Colonic mucosa (tissue), 4 donors: ENCODE measurements at regions of chr13 and their contacts with region 1.

Region 1: DNA sequence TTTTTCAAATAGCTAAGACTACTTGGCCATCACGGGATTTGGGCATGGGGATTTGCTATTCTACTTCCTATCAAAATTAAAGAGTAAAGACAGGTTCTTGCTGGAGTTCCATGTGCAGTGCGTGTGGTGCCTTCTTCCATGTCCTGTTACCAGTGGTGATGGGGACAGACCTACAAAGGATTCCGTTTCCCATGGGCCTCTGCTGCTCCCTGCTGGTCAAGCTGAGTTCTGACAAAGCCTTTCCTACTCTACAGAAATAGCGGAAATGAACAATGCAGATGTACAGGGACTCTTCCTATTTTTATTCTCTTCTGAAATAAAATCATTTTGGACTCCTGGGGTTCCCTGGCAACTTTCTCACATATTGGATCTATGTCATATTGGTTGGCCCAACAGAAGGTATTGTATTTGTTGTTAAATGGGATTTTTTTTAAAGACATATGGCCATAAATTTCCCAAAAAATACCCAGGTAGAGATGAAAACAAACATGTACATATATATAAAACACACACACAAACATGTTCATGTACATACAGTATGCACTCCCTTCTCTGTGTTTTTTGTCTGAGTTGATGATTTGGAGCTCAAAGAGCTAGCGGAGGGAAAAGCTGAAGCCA is 90.5 kb upstream of the SLC15A1 start:
- DNase-seq: peak; percentile 72
- H3K4me3 ChIP-seq: no peak overlapping the region
- H3K27ac ChIP-seq: no peak overlapping the region
- H3K4me1 ChIP-seq: no peaks in the 10 kb centered on the region
- H3K27me3 ChIP-seq: no peaks in the 10 kb centered on the region
- CTCF ChIP-seq: peak; percentile 73

Region 2: DNA sequence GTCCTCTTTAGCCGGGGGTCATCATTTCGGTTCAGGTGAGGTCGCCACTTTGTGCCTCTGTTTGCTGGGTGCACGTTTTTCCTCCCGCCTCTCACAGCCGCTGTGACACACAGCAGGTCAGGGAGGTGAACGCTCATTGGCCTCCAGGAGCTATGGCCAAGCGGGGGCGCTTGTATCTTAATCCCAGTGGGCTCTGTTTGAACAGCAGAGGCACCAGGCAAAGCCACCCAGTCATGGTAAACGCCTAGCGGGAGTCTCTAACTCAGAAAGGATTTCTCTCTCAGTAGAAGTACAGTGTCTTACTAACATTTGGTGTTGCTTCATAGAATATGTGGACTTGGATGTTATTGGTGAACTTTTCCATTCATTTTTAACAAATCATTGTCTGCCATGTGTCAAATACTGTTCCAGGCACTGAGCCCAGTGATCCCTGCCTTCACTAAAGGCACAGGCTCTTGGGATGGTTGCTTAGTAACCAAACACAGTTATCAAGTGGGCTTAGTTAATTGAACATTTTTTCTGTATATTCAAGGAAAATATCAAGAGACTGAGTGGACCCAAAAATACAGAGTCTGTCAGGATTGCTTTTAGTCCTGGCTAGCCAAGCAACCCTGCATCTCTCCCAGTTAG is 452.8 kb before region 1 on chr13:
- intact Hi-C with region 1: no loop called
- DNase-seq: no peak
- H3K4me3 ChIP-seq: no peak overlapping the region
- H3K27ac ChIP-seq: no peak overlapping the region
- H3K4me1 ChIP-seq: no peaks in the 10 kb centered on the region
- H3K27me3 ChIP-seq: no peaks in the 10 kb centered on the region
- CTCF ChIP-seq: no peak

Region 3: DNA sequence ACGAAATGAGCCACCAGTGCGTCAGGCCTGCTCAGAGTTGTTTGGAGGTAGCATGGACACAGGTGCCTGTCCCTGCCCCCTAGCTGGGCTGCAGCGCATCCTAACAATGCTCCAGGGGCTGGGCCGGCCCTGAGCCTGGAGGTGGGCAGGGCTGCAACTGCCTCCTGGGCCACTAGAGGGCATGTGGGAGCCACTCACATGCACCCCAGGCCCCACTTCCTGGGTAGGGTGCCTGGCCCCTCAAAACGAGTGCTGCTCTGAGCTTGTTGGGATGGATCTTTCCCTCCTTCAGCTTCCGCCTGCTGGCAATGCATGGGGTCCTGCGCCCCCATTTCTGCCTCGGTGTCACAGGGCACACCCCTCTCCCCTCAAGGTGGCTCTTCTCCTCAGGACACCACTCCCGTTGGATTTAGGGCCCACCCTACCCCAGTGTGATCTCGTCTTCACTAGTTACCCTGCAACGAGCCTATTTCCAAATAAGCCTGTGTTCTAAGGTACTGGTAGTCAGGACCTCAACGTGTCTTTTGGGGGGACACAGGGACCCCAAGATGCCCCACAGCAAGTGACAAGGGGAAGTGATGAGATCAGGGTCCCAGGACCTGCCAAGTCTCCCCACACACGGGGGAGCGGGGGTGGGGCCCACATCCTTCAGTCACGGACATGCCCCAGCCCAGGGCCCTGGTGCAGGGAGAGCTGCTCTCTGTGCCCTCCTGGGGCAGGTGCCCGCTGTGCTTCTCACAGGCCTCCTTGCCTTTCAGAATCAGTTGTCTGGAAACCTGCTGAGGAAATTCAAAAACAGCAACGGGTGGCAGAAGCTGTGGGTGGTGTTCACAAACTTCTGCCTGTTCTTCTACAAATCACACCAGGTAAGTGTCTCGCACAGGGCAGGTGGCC is 397.4 kb before region 1 on chr13:
- intact Hi-C with region 1: loop called (anchors 5 kb)
- DNase-seq: peak; percentile 72
- H3K4me3 ChIP-seq: no peak overlapping the region
- H3K27ac ChIP-seq: no peak overlapping the region
- H3K4me1 ChIP-seq: no peaks in the 10 kb centered on the region
- H3K27me3 ChIP-seq: no peaks in the 10 kb centered on the region
- CTCF ChIP-seq: peak; percentile 96

Region 4: DNA sequence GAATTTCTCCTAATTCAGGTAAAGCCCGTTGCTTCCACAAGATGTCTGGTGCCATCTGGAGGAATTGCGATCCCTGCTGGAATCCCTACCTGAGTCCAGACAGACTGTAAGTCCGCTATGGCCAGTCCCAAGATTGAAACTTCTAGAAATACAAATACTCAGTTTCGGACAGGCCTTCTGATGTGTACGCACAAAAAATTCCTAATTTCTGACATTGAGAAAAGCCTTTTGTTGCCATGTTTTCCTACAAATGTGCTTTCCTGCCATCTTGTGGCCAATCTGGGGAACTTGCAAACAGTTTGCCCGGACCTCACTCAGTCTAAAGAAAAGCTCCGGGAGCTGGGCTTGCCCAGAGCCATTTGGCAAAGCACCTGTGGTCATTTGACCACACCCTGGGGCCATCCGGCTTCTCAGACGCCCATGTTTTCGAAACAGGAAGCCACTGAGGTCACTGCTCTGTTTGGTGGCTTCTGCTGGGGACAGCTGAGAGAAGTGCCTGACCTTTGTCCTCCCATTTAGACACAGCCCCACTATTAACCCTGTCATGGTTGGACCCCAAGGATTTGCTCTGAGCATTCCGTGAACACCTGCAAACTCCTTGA is 169.9 kb before region 1 on chr13:
- intact Hi-C with region 1: loop called (anchors 10 kb)
- DNase-seq: peak; percentile 72
- H3K4me3 ChIP-seq: no peak overlapping the region
- H3K27ac ChIP-seq: no peak overlapping the region
- H3K4me1 ChIP-seq: no peaks in the 10 kb centered on the region
- H3K27me3 ChIP-seq: no peaks in the 10 kb centered on the region
- CTCF ChIP-seq: peak; percentile 87

Region 5: GRCh38 chr13:99151516-99151915 is 308.5 kb after region 1 on chr13:
- intact Hi-C with region 1: no loop called
- DNase-seq: no peak
- H3K4me3 ChIP-seq: no peak overlapping the region
- H3K27ac ChIP-seq: no peak overlapping the region
- H3K4me1 ChIP-seq: no peaks in the 10 kb centered on the region
- H3K27me3 ChIP-seq: peaks cover 4% of the 10 kb centered on the region
- CTCF ChIP-seq: no peak